AG04449 (cell line): ENCODE measurements at regions of chr12 and their contacts with region 1.

Region 1: DNA sequence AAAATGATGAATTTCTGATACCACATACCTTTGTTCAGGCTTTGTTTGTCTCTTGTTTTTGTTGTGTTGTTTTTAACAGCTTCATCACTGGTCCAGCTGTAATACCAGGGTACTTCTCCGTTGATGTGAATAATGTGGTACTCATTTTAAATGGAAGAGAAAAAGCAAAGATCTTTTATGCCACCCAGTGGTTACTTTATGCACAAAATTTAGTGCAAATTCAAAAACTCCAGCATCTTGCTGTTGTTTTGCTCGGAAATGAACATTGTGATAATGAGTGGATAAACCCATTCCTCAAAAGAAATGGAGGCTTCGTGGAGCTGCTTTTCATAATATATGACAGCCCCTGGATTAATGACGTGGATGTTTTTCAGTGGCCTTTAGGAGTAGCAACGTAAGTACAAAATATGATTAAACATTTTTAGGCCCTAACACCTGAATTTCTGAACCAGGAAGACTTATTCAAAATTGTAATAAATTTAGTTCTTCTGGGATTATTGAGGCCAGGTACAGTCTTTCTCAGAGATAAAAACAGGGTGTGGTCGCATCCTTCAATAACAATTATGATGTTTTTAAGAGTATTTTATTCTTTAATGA is 22.4 kb downstream of the RXYLT1 start:
- DNase-seq: no peak
- H3K4me3 ChIP-seq: no peak overlapping the region
- CTCF ChIP-seq: peak; percentile 23

Region 2: GRCh38 chr12:63103494-63104131 is 698.5 kb before region 1 on chr12:
- CTCF ChIA-PET with region 1: interaction called, 16 read pairs
- POLR2A ChIA-PET with region 1: no interaction called
- DNase-seq: no peak
- H3K4me3 ChIP-seq: no peak overlapping the region
- CTCF ChIP-seq: peak; percentile 56

Region 3: DNA sequence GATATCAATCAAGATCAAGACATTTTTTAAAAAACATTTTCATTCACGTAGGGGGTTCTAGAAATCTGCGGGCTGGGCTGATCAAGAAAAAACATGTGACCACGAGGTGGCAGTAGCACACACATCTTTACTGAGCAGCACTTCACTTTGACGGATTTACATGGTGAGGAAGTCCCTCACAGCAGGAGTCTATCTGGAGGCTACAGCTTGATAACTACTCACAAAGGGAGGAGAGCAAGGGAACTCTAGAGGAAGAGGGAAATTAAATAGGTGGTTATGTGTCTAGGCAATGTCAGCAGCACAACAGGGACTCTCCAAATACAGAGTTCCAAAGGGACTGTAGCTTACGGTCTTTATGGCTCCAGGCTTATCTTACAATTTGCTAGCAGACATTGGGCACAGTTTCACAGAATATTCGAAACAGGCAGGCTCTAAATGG is 381.9 kb before region 1 on chr12:
- CTCF ChIA-PET with region 1: interaction called, 78 read pairs
- POLR2A ChIA-PET with region 1: no interaction called
- DNase-seq: peak; percentile 5
- H3K4me3 ChIP-seq: no peak overlapping the region
- CTCF ChIP-seq: peak; percentile 74

Region 4: DNA sequence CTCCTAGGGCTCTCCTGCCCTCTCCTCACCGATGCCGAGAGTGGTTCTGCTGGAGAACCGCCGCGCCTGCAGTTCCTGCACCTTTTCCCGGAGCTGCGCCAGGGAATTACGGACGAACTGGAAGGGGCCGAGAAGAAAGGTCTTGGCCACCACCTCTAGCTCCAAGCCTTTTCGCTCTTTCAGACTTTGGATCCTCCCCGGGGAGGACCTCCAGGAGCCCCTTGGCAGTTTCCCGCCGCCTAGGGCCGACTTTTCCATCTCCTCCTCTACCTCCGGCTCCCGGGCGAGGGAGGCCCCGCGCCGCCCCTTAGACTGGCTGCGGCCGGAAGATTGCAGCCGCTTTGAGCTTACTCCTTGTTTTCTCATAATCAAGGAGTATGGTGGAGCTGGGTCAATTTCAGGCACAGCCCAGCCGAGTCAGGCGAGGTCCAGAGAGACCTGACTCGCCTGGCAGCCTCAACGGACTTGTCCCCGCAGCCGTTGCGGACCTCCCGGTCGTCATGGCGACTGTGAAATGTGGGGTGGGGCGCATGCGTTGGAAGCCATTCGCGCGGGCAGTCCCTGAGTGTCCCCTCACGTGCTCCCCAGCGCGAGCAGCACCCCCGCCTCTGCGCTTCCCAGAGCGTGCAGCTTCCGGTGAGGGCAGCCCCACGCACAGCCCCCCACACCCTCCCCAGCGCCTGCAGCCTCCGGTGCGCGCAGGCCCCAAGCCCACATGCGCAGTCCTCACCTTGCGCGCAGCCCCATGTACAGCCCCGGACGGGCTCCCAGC is 133.9 kb before region 1 on chr12 and contains the start of gene DPY19L2:
- CTCF ChIA-PET with region 1: interaction called, 23 read pairs
- POLR2A ChIA-PET with region 1: no interaction called
- DNase-seq: no peak
- H3K4me3 ChIP-seq: peak within 1 kb of the TSS; percentile 72
- CTCF ChIP-seq: no peak

Region 5: GRCh38 chr12:63753744-63754143 is 48.4 kb before region 1 on chr12:
- CTCF ChIA-PET with region 1: no interaction called
- POLR2A ChIA-PET with region 1: no interaction called
- DNase-seq: no peak
- H3K4me3 ChIP-seq: no peak overlapping the region
- CTCF ChIP-seq: no peak

Region 6: GRCh38 chr12:63782466-63782865 is 19.6 kb before region 1 on chr12:
- CTCF ChIA-PET with region 1: interaction called, 10 read pairs
- POLR2A ChIA-PET with region 1: no interaction called
- DNase-seq: no peak
- H3K4me3 ChIP-seq: no peak overlapping the region
- CTCF ChIP-seq: no peak

Region 7: GRCh38 chr12:63814146-63814772 is 12.1 kb after region 1 on chr12:
- CTCF ChIA-PET with region 1: interaction called, 23 read pairs
- POLR2A ChIA-PET with region 1: no interaction called
- DNase-seq: no peak
- H3K4me3 ChIP-seq: no peak overlapping the region
- CTCF ChIP-seq: no peak

Region 8: GRCh38 chr12:63826006-63826585 is 24.0 kb after region 1 on chr12:
- CTCF ChIA-PET with region 1: interaction called, 12 read pairs
- POLR2A ChIA-PET with region 1: no interaction called
- DNase-seq: no peak
- H3K4me3 ChIP-seq: no peak overlapping the region
- CTCF ChIP-seq: peak; percentile 71